Calu3 (cell line): ENCODE measurements at regions of chr1 and their contacts with region 1.

Region 1: GRCh38 chr1:25895365-25895993 is 10.7 kb downstream of the STMN1 start:
- DNase-seq: peak; percentile 89
- H3K4me3 Mint-ChIP-seq: no peak overlapping the region
- H3K27ac Mint-ChIP-seq: no peak overlapping the region
- H3K4me1 Mint-ChIP-seq: peaks cover 3% of the 10 kb centered on the region
- H3K27me3 Mint-ChIP-seq: no peaks in the 10 kb centered on the region
- CTCF ChIP-seq: peak; percentile 85

Region 2: DNA sequence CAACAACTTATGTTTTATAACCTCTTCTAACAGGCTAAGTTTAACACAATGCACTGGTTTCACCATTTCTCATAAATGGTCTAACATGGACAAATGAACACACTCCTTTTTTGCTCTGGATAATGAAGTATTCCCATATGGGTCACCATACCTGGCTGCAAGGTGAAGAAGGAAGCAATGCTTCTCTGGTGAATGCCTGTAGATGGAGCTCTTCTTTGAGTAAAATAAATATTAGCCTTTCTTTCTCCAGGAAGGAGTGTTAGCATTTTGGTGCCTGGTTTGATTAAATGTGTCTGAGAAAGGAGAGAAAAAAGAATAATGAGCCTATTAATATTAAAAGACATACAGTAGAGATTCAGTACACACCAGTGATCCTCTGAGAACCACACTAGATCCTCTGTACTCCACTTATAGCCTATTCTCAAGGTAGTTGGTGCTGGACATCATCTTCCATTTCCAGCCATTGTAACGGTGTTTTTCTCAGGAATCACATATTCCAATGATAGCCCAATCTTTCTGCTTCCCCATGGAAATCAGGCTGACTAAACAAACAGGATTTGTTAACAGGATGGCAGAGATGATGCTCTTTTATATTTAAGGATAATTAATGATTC is 58.1 kb before region 1 on chr1:
- CTCF ChIA-PET with region 1: interaction called, 8 read pairs
- intact Hi-C with region 1: loop called (anchors 5 kb)
- DNase-seq: no peak
- H3K4me3 Mint-ChIP-seq: no peak overlapping the region
- H3K27ac Mint-ChIP-seq: no peak overlapping the region
- H3K4me1 Mint-ChIP-seq: no peaks in the 10 kb centered on the region
- H3K27me3 Mint-ChIP-seq: no peaks in the 10 kb centered on the region
- CTCF ChIP-seq: no peak

Region 3: DNA sequence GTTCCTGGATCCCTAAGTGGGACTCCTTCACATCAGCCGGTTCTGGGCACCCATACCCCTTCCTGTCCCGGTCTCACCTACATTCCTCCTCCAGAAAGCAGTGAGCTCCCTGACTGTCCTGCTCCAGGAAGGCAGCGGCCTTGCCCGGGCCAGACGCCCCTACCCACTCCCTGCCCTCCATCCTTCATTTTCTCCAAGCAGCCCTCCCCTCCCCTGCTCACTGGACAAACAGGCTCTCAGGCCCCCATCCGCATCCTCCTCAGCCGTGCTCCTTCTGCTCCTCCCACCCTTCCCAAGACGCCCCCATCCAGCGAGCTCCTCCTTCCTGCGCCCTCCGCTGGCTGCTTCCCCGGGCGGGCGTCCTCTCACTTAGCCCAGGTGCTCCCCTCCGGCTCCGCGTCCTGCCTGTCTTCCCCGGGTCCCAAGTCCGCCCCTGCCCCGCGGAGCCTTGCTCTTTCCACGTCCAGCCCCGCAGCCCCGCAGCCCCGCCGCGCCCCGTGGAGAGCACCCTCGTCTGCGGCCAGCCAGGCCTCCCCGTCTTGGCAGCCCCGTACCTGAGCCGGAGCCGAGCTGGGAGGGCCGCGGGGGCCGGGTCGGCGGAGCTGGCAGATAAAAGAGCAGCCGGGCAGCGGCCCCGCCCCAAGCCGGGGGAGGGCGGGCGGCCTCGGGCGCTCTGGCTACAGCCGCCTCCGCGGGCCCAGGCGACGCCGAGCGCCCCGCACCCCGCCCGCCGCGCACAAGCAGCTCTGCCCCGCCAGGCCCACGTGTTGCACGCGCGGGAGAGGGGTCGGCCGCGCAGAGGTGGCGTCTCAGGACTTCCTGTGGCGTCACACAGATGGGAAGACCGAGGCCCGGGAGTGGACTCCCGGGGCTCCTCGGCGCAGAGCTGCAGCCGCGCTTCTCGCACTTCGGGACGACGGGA is 20.3 kb before region 1 on chr1 and contains the start of gene PAQR7:
- CTCF ChIA-PET with region 1: interaction called, 10 read pairs
- intact Hi-C with region 1: no loop called
- DNase-seq: peak; percentile 74
- H3K4me3 Mint-ChIP-seq: peak within 1 kb of the TSS; percentile 80
- H3K27ac Mint-ChIP-seq: peak within 1 kb of the TSS; percentile 35
- H3K4me1 Mint-ChIP-seq: peaks cover 24% of the 10 kb centered on the region
- H3K27me3 Mint-ChIP-seq: no peaks in the 10 kb centered on the region
- CTCF ChIP-seq: no peak
- total RNA-seq, gene PAQR7: 13.6 and 15.9 TPM in 2 replicates

Region 4: DNA sequence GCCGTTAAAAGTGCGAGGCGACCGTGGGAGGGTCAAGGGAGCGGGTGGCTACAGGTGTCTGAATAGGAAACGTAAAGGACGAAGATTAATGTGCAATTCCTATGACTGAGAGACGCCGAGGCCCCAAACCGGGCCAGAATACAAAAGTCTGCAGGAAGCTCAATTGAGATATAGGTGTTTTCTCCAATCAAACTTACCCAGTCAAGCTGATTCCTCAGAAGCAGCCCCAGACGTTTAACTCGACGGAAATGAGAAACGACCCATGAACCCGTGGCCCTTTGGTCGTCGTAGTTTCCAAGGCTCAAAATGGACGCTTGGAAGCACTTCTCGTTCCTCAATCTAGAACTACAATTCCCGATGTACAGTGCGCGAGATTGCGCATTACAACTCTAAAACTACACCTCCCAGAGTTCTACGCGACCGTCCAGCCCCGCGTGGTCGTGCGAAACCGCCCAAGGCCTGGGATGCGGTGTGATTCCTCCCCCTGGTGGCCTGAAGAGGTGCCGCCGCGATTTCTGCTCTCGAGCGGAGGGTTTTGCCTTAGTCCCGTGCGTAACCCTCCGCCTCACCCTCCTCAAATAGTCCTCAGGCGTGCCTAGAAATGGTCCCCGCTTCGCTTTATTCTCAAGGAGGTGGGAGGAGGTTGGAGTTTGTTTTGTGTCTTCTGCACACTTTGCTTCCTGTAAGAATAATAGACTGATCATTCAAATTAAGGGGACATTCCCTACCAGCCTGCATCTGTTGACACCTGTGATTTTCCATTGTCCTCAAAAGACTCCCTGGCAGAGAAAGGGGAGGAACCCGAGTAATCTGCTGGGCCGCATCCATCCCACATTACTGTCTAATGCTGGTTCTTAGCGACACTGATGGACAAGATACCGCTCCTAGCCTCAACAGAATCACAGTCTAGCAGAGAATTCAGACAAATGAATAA is 102.6 kb after region 1 on chr1 and contains the start of gene PAFAH2:
- CTCF ChIA-PET with region 1: interaction called, 22 read pairs
- intact Hi-C with region 1: loop called (anchors 5 kb)
- DNase-seq: peak; percentile 91
- H3K4me3 Mint-ChIP-seq: peak within 1 kb of the TSS; percentile 92
- H3K27ac Mint-ChIP-seq: peak within 1 kb of the TSS; percentile 91
- H3K4me1 Mint-ChIP-seq: no peaks in the 10 kb centered on the region
- H3K27me3 Mint-ChIP-seq: no peaks in the 10 kb centered on the region
- CTCF ChIP-seq: peak; percentile 83
- total RNA-seq, gene PAFAH2: 8.4 and 11.5 TPM in 2 replicates

Region 5: DNA sequence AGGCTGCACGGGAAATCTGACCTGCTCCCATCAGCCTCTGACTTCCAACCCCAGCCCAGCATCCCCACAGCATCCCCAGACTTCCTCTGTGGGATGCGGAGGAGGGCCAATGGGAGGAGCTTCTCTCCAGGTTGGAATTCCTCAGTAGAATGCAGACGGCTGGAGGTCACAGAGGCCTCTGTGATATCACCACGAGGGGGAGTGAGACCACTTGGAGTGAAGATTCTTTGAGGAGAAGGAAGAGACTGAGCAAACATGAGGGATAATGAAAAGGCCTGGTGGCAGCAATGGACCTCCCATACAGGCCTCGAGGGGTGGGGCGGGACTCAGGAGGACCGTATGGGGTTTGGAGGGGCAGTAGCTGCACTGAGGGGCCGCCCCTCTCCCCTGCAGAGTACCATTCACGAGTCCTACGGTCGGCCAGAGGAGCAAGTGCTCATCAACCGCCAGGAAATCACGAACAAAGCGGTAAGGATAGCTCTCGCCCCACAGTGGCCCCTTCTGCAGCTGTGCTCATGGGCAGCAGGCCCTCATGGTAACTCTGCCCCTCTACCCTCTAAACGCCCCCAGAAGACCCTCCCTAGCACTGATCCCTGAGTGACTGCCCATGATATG is 295.0 kb after region 1 on chr1 and contains the start of gene CATSPER4:
- CTCF ChIA-PET with region 1: no interaction called
- intact Hi-C with region 1: no loop called
- DNase-seq: no peak
- H3K4me3 Mint-ChIP-seq: no peak within 1 kb of the TSS
- H3K27ac Mint-ChIP-seq: no peak within 1 kb of the TSS
- H3K4me1 Mint-ChIP-seq: no peaks in the 10 kb centered on the region
- H3K27me3 Mint-ChIP-seq: peaks cover 18% of the 10 kb centered on the region
- CTCF ChIP-seq: no peak
- total RNA-seq, gene CATSPER4: not detected in 2 replicates